ENCODE measurements at regions of chr21 and their contacts with region 1.

Region 1: DNA sequence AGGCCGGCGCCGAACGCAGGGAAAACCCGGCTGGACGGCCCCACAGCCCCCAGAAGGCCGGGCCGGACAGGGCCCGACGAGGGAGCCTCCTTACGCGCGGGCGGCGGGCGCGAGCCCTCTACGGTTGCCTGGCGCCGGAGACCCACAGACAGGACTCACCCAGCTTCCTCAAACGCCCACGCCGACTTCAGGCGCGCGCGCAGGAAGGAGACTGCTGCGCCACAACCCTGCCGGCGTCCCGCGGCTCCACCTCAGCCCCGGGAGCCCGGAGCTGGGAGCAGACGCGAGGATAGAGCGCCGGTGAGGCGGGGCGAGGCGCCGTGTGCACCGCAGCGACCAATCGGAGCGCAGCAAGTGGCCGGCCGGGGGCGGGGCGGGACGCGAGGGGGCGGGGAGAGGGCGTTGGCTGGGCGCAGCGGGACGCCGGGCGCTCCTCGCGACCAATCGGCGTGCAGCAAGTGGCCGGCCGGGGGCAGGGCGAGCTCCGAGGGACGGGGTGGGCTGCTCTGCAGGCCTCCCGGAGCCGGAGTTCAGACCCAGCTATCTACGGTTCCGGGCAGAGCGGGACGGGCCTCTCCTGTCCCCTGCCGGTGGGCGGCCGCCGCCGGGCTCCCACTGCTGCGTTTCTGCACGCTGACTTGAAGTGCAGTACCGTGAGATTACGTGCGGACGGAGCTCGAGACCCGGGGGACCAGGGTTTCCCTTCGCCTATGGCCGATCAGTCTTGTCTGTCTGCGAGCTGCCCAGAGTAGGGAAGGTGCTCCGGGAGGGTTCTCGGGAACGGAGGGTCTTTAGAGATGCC is at the start of gene TMEM50B:
- DNase-seq: peak; percentile 95
- ATAC-seq: peak; percentile 94
- H3K4me3 Mint-ChIP-seq: peak within 1 kb of the TSS; percentile 82
- H3K27ac Mint-ChIP-seq: peak within 1 kb of the TSS; percentile 97
- H3K4me1 Mint-ChIP-seq: peaks cover 6% of the 10 kb centered on the region
- H3K27me3 Mint-ChIP-seq: peaks cover 8% of the 10 kb centered on the region
- CTCF ChIP-seq: no peak
- total RNA-seq, gene TMEM50B: 21.0 to 26.0 TPM (median 25.4 TPM) in 3 replicates

Region 2: DNA sequence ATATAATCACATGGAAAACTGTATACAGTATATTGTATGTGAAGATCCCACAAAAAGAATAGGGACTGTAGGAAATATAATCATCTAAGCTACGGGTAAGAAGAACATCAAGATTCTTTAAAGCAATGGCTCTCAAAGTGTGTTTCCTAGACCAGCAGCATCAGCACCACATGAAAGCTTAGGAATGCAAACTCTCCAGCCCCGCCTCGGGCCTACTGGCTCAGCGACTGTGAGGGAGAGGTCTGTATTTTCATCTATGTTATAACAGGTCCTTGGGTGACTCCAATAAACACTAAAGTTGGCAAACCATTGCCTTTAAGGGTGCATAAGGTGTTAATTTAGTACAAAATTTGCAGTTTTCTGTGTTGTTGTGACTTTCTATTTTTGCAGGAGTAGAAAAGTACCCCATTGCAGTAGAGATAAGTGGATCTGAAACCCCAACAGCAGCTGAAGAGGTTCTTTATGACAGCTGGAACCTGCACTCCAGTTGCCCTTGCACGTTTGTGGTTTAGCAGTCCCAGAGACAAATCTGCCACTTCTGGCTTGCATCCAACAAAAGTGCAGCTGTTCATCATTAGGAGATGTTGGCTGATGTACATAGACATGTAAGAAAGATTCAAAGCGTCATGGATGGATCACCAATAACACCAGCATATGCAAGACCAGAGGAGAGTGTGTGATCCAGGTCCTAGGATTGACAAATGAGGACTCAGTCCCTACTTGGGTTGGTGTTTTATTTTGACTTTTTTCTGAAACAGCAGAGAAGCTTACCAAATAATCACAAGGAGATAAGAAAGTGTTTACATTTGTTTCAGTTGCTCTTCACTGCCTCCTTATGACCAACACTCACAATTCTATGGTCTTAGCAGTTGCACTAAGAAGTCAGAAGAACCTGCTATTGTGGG is 171.0 kb before region 1 on chr21:
- CTCF ChIA-PET with region 1: no interaction called
- POLR2A ChIA-PET with region 1: no interaction called
- DNase-seq: no peak
- ATAC-seq: no peak
- H3K4me3 Mint-ChIP-seq: no peak overlapping the region
- H3K27ac Mint-ChIP-seq: no peak overlapping the region
- H3K4me1 Mint-ChIP-seq: no peaks in the 10 kb centered on the region
- H3K27me3 Mint-ChIP-seq: no peaks in the 10 kb centered on the region; the same call in 1 of the 2 replicates
- CTCF ChIP-seq: no peak

Region 3: GRCh38 chr21:33491373-33492102 is 11.7 kb after region 1 on chr21 and contains the start of gene DNAJC28:
- CTCF ChIA-PET with region 1: interaction called, 14 read pairs
- POLR2A ChIA-PET with region 1: interaction called, 15 read pairs
- DNase-seq: peak; percentile 97
- ATAC-seq: peak; percentile 96
- H3K4me3 Mint-ChIP-seq: peak within 1 kb of the TSS; percentile 90
- H3K27ac Mint-ChIP-seq: peak within 1 kb of the TSS; percentile 86
- H3K4me1 Mint-ChIP-seq: peaks cover 21% of the 10 kb centered on the region
- H3K27me3 Mint-ChIP-seq: peaks cover 3% of the 10 kb centered on the region; the same call in 1 of the 2 replicates
- CTCF ChIP-seq: no peak
- total RNA-seq, gene DNAJC28: 2.6 to 4.0 TPM (median 3.5 TPM) in 3 replicates